ENCODE measurements at regions of chr13 and their contacts with region 1.

Region 1: GRCh38 chr13:44710576-44710975 is 134.4 kb upstream of the TSC22D1 start:
- DNase-seq: no peak
- H3K4me3 Mint-ChIP-seq: no peak overlapping the region
- H3K27ac Mint-ChIP-seq: no peak overlapping the region
- H3K4me1 Mint-ChIP-seq: peaks cover 8% of the 10 kb centered on the region
- H3K27me3 Mint-ChIP-seq: peaks cover 15% of the 10 kb centered on the region

Region 2: GRCh38 chr13:44768239-44768638 is 57.7 kb after region 1 on chr13:
- intact Hi-C with region 1: loop called (anchors 5 kb)
- DNase-seq: peak; percentile 16
- H3K4me3 Mint-ChIP-seq: no peak overlapping the region
- H3K27ac Mint-ChIP-seq: peak overlapping the region; percentile 52
- H3K4me1 Mint-ChIP-seq: peaks cover 27% of the 10 kb centered on the region
- H3K27me3 Mint-ChIP-seq: peaks cover 6% of the 10 kb centered on the region

Measured in activated T-helper 2 cell treated with anti-CD3 and anti-CD28 coated beads, Interferon-gamma antibody, Interleukin-2, Interleukin-4, amounts not matched to agents 10 μg/mL and 5 μg/mL and 100 μg/mL, durations not matched to agents 14 hours and 24 hours and 36 hours (primary cell).